IMR-90 (cell line): ENCODE measurements at regions of chr4 and their contacts with region 1.

Region 1: DNA sequence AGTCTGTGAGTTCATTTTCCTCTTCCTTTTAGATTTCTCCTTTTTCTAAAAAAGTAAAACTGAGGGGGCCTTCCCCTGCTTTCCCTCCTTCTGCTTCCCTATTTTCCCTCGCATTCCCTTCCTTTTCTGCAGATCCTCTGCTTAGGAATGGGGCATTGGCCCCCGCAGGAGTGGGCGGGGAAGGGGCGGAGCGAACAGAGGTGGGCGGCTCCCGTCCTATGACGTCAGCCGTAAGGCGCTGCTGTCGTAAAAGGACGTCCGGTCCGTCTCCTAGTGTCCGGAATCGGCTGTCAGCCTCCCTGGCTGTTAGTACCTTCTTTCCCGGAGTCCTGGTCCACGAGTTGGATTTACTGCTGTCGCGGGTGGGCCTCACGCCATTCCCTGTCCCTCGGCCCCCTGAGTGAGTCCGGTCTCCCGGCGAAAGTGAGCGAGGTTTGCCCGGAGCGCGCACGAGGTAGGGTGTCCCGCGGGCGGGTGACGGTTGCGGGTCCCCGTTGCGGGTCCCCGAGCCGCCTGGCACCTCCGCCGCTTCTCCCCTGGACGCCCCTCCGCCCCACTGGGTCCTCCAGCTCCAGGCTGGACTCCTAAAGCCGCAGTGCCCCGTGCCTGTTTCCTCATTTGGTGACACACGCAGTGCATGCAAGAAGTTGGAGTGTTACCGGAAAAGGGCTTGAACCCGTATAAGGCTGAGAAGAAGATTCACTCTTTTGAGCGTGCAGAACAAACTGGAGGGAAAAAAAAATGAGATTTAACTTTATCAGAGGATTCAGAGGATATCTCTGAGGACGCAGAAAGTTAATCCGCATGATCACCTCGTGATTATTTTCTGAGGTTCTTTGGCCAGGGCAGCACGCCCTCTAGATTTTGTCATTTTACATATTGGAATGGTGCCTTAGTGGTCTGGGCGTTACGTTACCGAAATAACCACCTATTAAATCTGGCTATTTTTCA is at the start of gene ZNF330:
- DNase-seq: peak; percentile 93
- ATAC-seq: peak; percentile 99
- H3K4me3 ChIP-seq: peak within 1 kb of the TSS; percentile 94
- H3K27ac ChIP-seq: peak within 1 kb of the TSS; percentile 95
- H3K4me1 ChIP-seq: peaks cover 2% of the 10 kb centered on the region
- H3K27me3 ChIP-seq: no peaks in the 10 kb centered on the region
- CTCF ChIP-seq: peak; percentile 23; the same call in 1 of the 2 replicates
- POLR2A ChIP-seq: peak; percentile 82
- RAD21 ChIP-seq: no peak
- total RNA-seq, gene ZNF330: 34.1 and 47.2 TPM in 2 replicates

Region 2: GRCh38 chr4:141331534-141332358 is 110.8 kb after region 1 on chr4:
- CTCF ChIA-PET with region 1: no interaction called
- POLR2A ChIA-PET with region 1: no interaction called
- dilution Hi-C with region 1: no loop called
- in situ Hi-C with region 1: no loop called
- intact Hi-C with region 1: loop called (anchors 5 kb)
- DNase-seq: no peak
- ATAC-seq: no peak
- H3K4me3 ChIP-seq: no peak overlapping the region
- H3K27ac ChIP-seq: no peak overlapping the region
- H3K4me1 ChIP-seq: peaks cover 16% of the 10 kb centered on the region
- H3K27me3 ChIP-seq: no peaks in the 10 kb centered on the region
- CTCF ChIP-seq: no peak
- POLR2A ChIP-seq: no peak
- RAD21 ChIP-seq: no peak

Region 3: GRCh38 chr4:141643557-141643956 is 422.6 kb after region 1 on chr4:
- CTCF ChIA-PET with region 1: no interaction called
- POLR2A ChIA-PET with region 1: no interaction called
- dilution Hi-C with region 1: no loop called
- in situ Hi-C with region 1: no loop called
- intact Hi-C with region 1: loop called (anchors 10 kb)
- DNase-seq: peak; percentile 92
- ATAC-seq: peak; percentile 85
- H3K4me3 ChIP-seq: no peak overlapping the region
- H3K27ac ChIP-seq: no peak overlapping the region
- H3K4me1 ChIP-seq: peaks cover 11% of the 10 kb centered on the region; the same call in 1 of the 2 replicates
- H3K27me3 ChIP-seq: no peaks in the 10 kb centered on the region
- CTCF ChIP-seq: no peak
- POLR2A ChIP-seq: no peak
- RAD21 ChIP-seq: no peak

Region 4: GRCh38 chr4:141711014-141711610 is 490.2 kb after region 1 on chr4:
- CTCF ChIA-PET with region 1: no interaction called
- POLR2A ChIA-PET with region 1: no interaction called
- dilution Hi-C with region 1: no loop called
- in situ Hi-C with region 1: no loop called
- intact Hi-C with region 1: loop called (anchors 5 kb)
- DNase-seq: peak; percentile 51
- ATAC-seq: peak; percentile 63; the same call in 1 of the 2 replicates
- H3K4me3 ChIP-seq: no peak overlapping the region
- H3K27ac ChIP-seq: no peak overlapping the region
- H3K4me1 ChIP-seq: peaks cover 9% of the 10 kb centered on the region
- H3K27me3 ChIP-seq: no peaks in the 10 kb centered on the region
- CTCF ChIP-seq: peak; percentile 70
- POLR2A ChIP-seq: no peak
- RAD21 ChIP-seq: peak; percentile 72

Region 5: GRCh38 chr4:142095886-142096605 is 875.1 kb after region 1 on chr4:
- CTCF ChIA-PET with region 1: no interaction called
- POLR2A ChIA-PET with region 1: no interaction called
- dilution Hi-C with region 1: no loop called
- in situ Hi-C with region 1: no loop called
- intact Hi-C with region 1: loop called (anchors 10 kb)
- DNase-seq: peak; percentile 96
- ATAC-seq: peak; percentile 53
- H3K4me3 ChIP-seq: no peak overlapping the region
- H3K27ac ChIP-seq: no peak overlapping the region
- H3K4me1 ChIP-seq: peaks cover 9% of the 10 kb centered on the region
- H3K27me3 ChIP-seq: no peaks in the 10 kb centered on the region
- CTCF ChIP-seq: no peak
- POLR2A ChIP-seq: no peak
- RAD21 ChIP-seq: no peak

Region 6: GRCh38 chr4:142637614-142638013 is 1416.7 kb after region 1 on chr4:
- CTCF ChIA-PET with region 1: no interaction called
- POLR2A ChIA-PET with region 1: no interaction called
- dilution Hi-C with region 1: no loop called
- in situ Hi-C with region 1: no loop called
- intact Hi-C with region 1: no loop called
- DNase-seq: no peak
- ATAC-seq: no peak
- H3K4me3 ChIP-seq: no peak overlapping the region
- H3K27ac ChIP-seq: no peak overlapping the region
- H3K4me1 ChIP-seq: no peaks in the 10 kb centered on the region
- H3K27me3 ChIP-seq: no peaks in the 10 kb centered on the region
- CTCF ChIP-seq: no peak
- POLR2A ChIP-seq: no peak
- RAD21 ChIP-seq: no peak